ENCODE measurements at regions of chr2 and their contacts with region 1.

Region 1: GRCh38 chr2:165558832-165559231 is 89.3 kb downstream of the CSRNP3 start:
- DNase-seq: no peak
- H3K4me3 ChIP-seq: no peak overlapping the region
- H3K27ac ChIP-seq: no peak overlapping the region
- H3K4me1 ChIP-seq: no peaks in the 10 kb centered on the region
- H3K27me3 ChIP-seq: no peaks in the 10 kb centered on the region
- CTCF ChIP-seq: no peak

Region 2: GRCh38 chr2:165369131-165369935 is 189.5 kb before region 1 on chr2:
- intact Hi-C with region 1: no loop called
- DNase-seq: no peak
- H3K4me3 ChIP-seq: no peak overlapping the region
- H3K27ac ChIP-seq: no peak overlapping the region
- H3K4me1 ChIP-seq: no peaks in the 10 kb centered on the region
- H3K27me3 ChIP-seq: no peaks in the 10 kb centered on the region
- CTCF ChIP-seq: no peak

Region 3: DNA sequence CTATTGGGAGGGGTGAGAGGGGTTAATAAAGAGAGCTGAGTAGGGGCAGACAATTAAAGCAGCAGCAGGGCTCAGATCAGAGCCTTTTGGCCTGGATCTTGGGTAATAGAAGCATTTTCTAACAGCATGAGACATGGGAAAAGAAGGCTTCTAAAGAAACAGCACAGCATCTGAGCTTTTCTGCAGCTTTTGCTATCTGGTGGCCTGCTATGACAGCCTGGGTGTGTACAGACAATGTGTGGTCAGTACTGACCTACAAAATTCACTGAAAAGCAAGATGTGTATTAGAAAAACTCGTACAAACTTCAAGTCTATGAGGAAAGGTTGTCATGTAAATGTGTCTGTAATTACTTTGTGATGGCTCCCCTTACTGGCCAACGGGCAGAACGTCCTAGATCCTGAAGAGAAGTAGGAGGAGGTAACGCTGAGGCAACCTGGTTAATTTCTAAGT is 139.6 kb after region 1 on chr2:
- intact Hi-C with region 1: loop called (anchors 10 kb)
- DNase-seq: peak; percentile 36
- H3K4me3 ChIP-seq: no peak overlapping the region
- H3K27ac ChIP-seq: no peak overlapping the region
- H3K4me1 ChIP-seq: no peaks in the 10 kb centered on the region
- H3K27me3 ChIP-seq: no peaks in the 10 kb centered on the region
- CTCF ChIP-seq: peak; percentile 23

Region 4: GRCh38 chr2:165825041-165825440 is 266.2 kb after region 1 on chr2:
- intact Hi-C with region 1: no loop called
- DNase-seq: no peak
- H3K4me3 ChIP-seq: no peak overlapping the region
- H3K27ac ChIP-seq: no peak overlapping the region
- H3K4me1 ChIP-seq: no peaks in the 10 kb centered on the region
- H3K27me3 ChIP-seq: no peaks in the 10 kb centered on the region
- CTCF ChIP-seq: no peak